HCT116 (cell line): ENCODE measurements at regions of chr7 and their contacts with region 1.

Region 1: DNA sequence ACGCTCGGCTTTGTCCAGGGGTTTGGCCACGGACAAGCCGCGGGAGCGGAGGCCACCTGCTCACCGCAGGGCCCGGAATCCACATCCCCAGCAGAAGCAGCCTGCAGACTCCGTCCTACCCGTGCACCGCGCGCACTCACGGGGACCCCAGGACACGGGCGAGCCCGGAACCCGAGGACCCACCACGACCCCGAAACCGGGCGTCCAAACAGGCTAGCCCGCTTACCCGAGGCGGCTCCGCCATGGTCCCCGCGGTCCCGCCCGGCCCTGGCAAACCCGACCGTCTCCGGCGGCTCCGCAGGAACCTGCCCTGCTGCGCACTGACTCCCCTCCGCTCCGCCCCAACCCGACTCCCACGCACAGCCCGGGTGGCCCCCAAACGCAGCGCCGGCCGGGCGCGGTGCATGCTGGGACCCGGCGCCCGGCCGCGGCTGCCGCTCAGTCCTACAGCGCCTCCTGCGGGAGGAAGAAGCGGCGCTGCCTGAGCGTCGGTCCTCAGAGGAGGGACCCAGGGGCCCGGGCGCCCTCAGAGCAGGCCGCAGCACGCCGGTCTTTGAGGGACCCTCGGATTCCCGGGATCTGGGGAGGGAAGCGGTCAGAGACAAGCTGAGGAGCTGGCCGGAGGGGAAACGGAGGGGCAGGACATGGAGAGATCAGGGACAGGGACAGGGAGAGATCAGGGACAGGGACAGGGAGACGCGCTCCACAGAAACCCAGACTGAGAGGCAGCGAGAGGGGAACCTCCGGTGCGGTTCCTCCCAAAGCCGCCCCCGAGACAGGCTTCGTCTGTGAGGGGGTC is at the start of gene ZNF786:
- DNase-seq: peak; percentile 62
- ATAC-seq: peak; percentile 91
- H3K4me3 ChIP-seq: peak within 1 kb of the TSS; percentile 87 to 91
- H3K27ac ChIP-seq: peak within 1 kb of the TSS; percentile 84
- H3K4me1 ChIP-seq: peaks cover 2 to 17% of the 10 kb centered on the region in 2 experiments; a peak in 1 of 4 replicates
- H3K27me3 ChIP-seq: no peaks in the 10 kb centered on the region
- CTCF ChIP-seq: peak; percentile 75 to 98 (median 88)
- POLR2A ChIP-seq: peak; percentile 85
- RAD21 ChIP-seq: peak; percentile 86
- total RNA-seq, gene ZNF786: 8.5 TPM

Region 2: GRCh38 chr7:148884299-148885022 is 206.1 kb before region 1 on chr7:
- CTCF ChIA-PET with region 1: no interaction called
- POLR2A ChIA-PET with region 1: no interaction called
- RAD21 ChIA-PET with region 1: no interaction called
- intact Hi-C with region 1: loop called (anchors 1 kb)
- DNase-seq: peak; percentile 74
- ATAC-seq: peak; percentile 91
- H3K4me3 ChIP-seq: peak overlapping the region; percentile 69 to 78
- H3K27ac ChIP-seq: peak overlapping the region; percentile 94
- H3K4me1 ChIP-seq: peaks cover 8 to 19% of the 10 kb centered on the region in 2 experiments; a peak in 3 of 4 replicates
- H3K27me3 ChIP-seq: no peaks in the 10 kb centered on the region
- CTCF ChIP-seq: no peak
- POLR2A ChIP-seq: no peak
- RAD21 ChIP-seq: no peak

Region 3: GRCh38 chr7:149005241-149006050 is 85.2 kb before region 1 on chr7:
- CTCF ChIA-PET with region 1: interaction called, 3 read pairs
- POLR2A ChIA-PET with region 1: no interaction called
- RAD21 ChIA-PET with region 1: no interaction called
- intact Hi-C with region 1: loop called (anchors 2 kb)
- DNase-seq: peak; percentile 43
- ATAC-seq: peak; percentile 89
- H3K4me3 ChIP-seq: no peak overlapping the region
- H3K27ac ChIP-seq: no peak overlapping the region
- H3K4me1 ChIP-seq: no peaks in the 10 kb centered on the region
- H3K27me3 ChIP-seq: no peaks in the 10 kb centered on the region
- CTCF ChIP-seq: peak; percentile 75 to 89 (median 76)
- POLR2A ChIP-seq: no peak
- RAD21 ChIP-seq: peak; percentile 60

Region 4: GRCh38 chr7:149071641-149072437 is 18.8 kb before region 1 on chr7:
- CTCF ChIA-PET with region 1: interaction called, 6 read pairs
- POLR2A ChIA-PET with region 1: interaction called, 6 read pairs
- RAD21 ChIA-PET with region 1: no interaction called
- intact Hi-C with region 1: loop called (anchors 2 kb)
- DNase-seq: peak; percentile 88
- ATAC-seq: peak; percentile 90
- H3K4me3 ChIP-seq: peak overlapping the region; percentile 68 to 77
- H3K27ac ChIP-seq: peak overlapping the region; percentile 77
- H3K4me1 ChIP-seq: peaks cover 4 to 24% of the 10 kb centered on the region in 2 experiments; a peak in 3 of 4 replicates
- H3K27me3 ChIP-seq: no peaks in the 10 kb centered on the region
- CTCF ChIP-seq: peak in 2 of 3 experiments; percentile 75 to 92; a peak in 4 of 6 replicates
- POLR2A ChIP-seq: no peak
- RAD21 ChIP-seq: no peak

Region 5: DNA sequence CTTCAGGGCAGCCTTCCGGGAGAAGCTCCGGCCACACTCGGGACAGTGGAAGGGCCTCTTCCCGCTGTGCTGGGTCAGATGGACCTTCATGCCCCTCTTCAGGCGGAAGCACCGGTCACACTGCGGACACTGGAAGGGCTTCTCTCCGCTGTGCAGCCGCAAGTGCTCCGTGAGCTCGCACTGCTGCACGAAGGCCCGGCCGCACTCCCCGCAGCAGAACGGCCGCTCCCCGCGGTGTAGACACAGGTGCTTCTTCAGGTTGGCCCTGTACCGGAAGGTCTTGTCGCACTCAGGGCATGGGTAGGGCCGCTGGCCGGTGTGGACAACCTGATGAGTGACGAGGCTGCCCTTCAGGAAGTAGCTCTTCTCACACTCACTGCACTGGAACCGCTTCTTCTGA is 14.2 kb after region 1 on chr7:
- CTCF ChIA-PET with region 1: no interaction called
- POLR2A ChIA-PET with region 1: no interaction called
- RAD21 ChIA-PET with region 1: no interaction called
- intact Hi-C with region 1: no loop called
- DNase-seq: no peak
- ATAC-seq: no peak; the same call in 1 of the 2 replicates
- H3K4me3 ChIP-seq: no peak overlapping the region
- H3K27ac ChIP-seq: no peak overlapping the region
- H3K4me1 ChIP-seq: peaks cover 0 to 2% of the 10 kb centered on the region in 2 experiments; a peak in 3 of 4 replicates
- H3K27me3 ChIP-seq: no peaks in the 10 kb centered on the region
- CTCF ChIP-seq: no peak
- POLR2A ChIP-seq: no peak
- RAD21 ChIP-seq: no peak